ENCODE measurements at regions of chr16 and their contacts with region 1.

Region 1: DNA sequence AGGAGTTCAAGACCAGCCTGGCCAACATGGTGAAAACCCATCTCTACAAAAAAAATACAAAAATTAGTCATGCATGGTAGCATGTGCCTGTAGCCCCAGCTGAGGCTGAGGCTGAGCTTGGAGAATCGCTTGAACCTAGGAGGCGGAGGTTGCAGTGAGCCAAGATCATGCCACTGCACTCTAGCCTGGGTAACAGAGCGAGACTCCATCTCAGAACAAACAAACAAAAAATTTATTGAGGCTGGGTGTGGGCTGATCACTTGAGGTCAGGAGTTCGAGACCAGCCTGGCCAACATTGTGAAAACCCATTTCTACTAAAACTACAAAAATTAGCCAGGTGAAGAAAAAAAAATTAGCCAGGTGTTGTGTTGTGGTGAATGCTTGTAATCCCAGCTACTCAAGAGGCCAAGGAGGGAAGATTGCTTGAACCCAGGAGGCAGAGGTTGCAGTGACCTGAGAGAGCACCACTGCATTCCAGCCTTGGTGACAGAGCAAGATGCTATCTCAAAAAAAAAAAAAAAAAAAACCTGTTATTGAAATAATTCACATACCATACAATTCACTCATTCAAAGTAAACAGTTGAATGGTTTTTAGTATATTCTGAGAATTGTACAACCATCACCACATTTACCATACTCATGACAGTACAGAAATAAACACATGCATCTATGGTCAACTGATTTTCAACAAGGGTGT is 30.9 kb downstream of the ZNRF1 start:
- DNase-seq: no peak
- ATAC-seq: no peak
- H3K4me3 ChIP-seq: no peak overlapping the region
- H3K4me3 Mint-ChIP-seq: no peak overlapping the region
- H3K27ac ChIP-seq: no peak overlapping the region
- H3K27ac Mint-ChIP-seq: no peak overlapping the region
- H3K4me1 ChIP-seq: peaks cover 0 to 3% of the 10 kb centered on the region in 2 experiments
- H3K4me1 Mint-ChIP-seq: peaks cover 7% of the 10 kb centered on the region in 3 donors
- H3K27me3 ChIP-seq: no peaks in the 10 kb centered on the region
- H3K27me3 Mint-ChIP-seq: no peaks in the 10 kb centered on the region

Region 2: GRCh38 chr16:74568961-74569631 is 460.6 kb before region 1 on chr16:
- CTCF ChIA-PET with region 1: no interaction called
- POLR2A ChIA-PET with region 1: interaction called in 1 of 2 experiments, 14 read pairs
- DNase-seq: no peak
- ATAC-seq: no peak
- H3K4me3 ChIP-seq: no peak overlapping the region
- H3K4me3 Mint-ChIP-seq: peak overlapping the region in 1 of 3 donors; percentile 42
- H3K27ac ChIP-seq: no peak overlapping the region
- H3K27ac Mint-ChIP-seq: peak overlapping the region in 1 of 2 donors; percentile 34
- H3K4me1 ChIP-seq: peaks cover 12 to 52% of the 10 kb centered on the region in 2 experiments
- H3K4me1 Mint-ChIP-seq: peaks cover 84 to 87% (median 84%) of the 10 kb centered on the region in 3 donors
- H3K27me3 ChIP-seq: no peaks in the 10 kb centered on the region
- H3K27me3 Mint-ChIP-seq: no peaks in the 10 kb centered on the region

Region 3: GRCh38 chr16:74793571-74793970 is 236.1 kb before region 1 on chr16:
- CTCF ChIA-PET with region 1: no interaction called
- POLR2A ChIA-PET with region 1: no interaction called
- DNase-seq: no peak
- ATAC-seq: no peak
- H3K4me3 ChIP-seq: no peak overlapping the region
- H3K4me3 Mint-ChIP-seq: no peak overlapping the region
- H3K27ac ChIP-seq: no peak overlapping the region
- H3K27ac Mint-ChIP-seq: no peak overlapping the region
- H3K4me1 ChIP-seq: no peaks in the 10 kb centered on the region
- H3K4me1 Mint-ChIP-seq: no peaks in the 10 kb centered on the region
- H3K27me3 ChIP-seq: peaks cover 0 to 8% of the 10 kb centered on the region in 2 experiments
- H3K27me3 Mint-ChIP-seq: peaks cover 28 to 37% of the 10 kb centered on the region in 2 donors

Region 4: DNA sequence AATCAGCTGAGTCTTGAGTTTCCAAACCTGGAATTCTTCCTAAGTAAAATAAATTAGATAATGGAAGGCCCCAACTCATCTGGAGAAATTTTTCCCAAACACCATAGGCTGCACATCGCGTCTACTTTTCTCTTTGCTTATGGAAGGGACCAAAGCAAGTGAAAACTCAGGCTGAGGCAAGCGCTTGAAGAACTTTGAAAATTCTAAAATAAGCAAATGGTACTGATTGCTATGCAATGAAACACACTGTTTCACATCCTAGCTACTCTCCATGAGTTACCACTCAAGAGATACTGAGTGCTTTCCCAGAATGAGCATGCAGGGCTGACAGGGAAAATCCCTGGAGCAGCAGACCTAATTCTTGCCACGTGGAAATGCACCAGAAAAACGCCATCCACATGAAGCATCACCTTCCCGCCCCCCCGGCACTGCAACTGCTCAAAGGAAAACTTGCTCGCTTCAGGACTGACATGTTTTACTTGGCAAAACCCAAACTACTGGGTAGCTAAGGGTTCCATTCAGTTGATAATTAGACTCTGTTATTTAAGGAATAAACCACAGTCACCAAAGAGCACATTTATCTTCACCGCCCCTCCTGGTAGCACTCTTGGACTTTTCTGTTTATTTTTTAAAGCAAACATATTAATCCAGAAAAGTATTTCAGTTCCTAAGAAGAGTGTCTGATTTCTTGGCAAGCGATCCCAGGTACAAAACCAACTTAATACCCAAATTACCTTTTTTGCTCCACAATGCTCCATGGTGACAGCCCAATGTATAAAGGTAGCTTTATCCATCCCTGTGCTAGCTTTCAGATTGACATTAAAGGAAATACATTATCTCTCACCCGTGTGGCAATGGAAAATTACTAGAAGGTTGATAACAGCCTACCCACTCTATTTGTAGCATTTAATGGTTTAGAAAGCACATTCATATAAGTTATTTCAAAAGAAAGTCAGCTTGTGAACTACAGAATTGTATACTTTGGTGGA is 107.3 kb before region 1 on chr16:
- CTCF ChIA-PET with region 1: no interaction called
- POLR2A ChIA-PET with region 1: no interaction called
- DNase-seq: no peak
- ATAC-seq: no peak
- H3K4me3 ChIP-seq: no peak overlapping the region
- H3K4me3 Mint-ChIP-seq: no peak overlapping the region
- H3K27ac ChIP-seq: no peak overlapping the region
- H3K27ac Mint-ChIP-seq: no peak overlapping the region
- H3K4me1 ChIP-seq: no peaks in the 10 kb centered on the region
- H3K4me1 Mint-ChIP-seq: no peaks in the 10 kb centered on the region
- H3K27me3 ChIP-seq: no peaks in the 10 kb centered on the region
- H3K27me3 Mint-ChIP-seq: no peaks in the 10 kb centered on the region

Region 5: DNA sequence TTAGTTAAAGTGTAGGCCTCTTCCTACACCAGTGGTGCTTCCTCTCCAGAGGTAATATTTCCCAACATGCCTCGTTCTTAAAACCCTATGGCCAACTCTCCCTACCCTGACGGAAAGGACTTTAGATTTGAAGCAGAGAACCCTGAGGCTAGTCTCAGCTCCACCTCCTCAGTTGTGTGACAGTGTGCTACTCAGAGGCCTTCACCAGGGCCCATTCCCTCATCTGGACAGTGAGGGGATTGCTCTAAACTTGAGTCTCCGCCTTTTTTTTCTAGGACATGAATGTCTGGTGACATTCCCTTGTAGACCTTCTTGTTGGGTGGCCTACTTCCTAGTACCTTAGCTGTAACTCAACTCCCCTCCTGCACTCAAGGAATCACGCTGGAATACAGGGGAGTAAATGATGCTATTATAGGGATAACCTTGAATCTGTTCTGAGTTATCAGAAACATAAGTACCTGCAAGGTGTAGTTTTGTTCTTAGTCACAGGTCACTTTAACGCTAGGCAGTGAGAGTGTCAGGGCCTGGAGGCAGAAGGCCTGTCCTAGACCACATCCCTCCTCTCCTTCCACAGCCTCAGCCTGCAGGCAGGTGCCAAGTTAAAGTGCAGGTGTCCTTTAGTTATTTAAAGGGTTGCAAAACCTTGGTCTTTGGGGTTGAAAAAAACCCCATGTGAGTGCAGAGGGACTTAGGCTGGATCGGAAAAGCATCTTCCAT is 59.9 kb after region 1 on chr16:
- CTCF ChIA-PET with region 1: no interaction called
- POLR2A ChIA-PET with region 1: interaction called, 3 to 14 read pairs
- DNase-seq: no peak
- ATAC-seq: no peak
- H3K4me3 ChIP-seq: no peak overlapping the region
- H3K4me3 Mint-ChIP-seq: no peak overlapping the region
- H3K27ac ChIP-seq: no peak overlapping the region
- H3K27ac Mint-ChIP-seq: no peak overlapping the region
- H3K4me1 ChIP-seq: no peaks in the 10 kb centered on the region
- H3K4me1 Mint-ChIP-seq: peaks cover 4 to 10% (median 5%) of the 10 kb centered on the region in 3 donors
- H3K27me3 ChIP-seq: no peaks in the 10 kb centered on the region
- H3K27me3 Mint-ChIP-seq: no peaks in the 10 kb centered on the region

Region 6: GRCh38 chr16:75192601-75193297 is 163.0 kb after region 1 on chr16:
- CTCF ChIA-PET with region 1: no interaction called
- POLR2A ChIA-PET with region 1: no interaction called
- DNase-seq: no peak
- ATAC-seq: no peak
- H3K4me3 ChIP-seq: no peak overlapping the region
- H3K4me3 Mint-ChIP-seq: no peak overlapping the region
- H3K27ac ChIP-seq: no peak overlapping the region
- H3K27ac Mint-ChIP-seq: no peak overlapping the region
- H3K4me1 ChIP-seq: no peaks in the 10 kb centered on the region
- H3K4me1 Mint-ChIP-seq: no peaks in the 10 kb centered on the region
- H3K27me3 ChIP-seq: peaks cover 0 to 27% of the 10 kb centered on the region in 2 experiments
- H3K27me3 Mint-ChIP-seq: peaks cover 8 to 11% of the 10 kb centered on the region in 2 donors